ENCODE measurements at regions of chr2 and their contacts with region 1.

Region 1: DNA sequence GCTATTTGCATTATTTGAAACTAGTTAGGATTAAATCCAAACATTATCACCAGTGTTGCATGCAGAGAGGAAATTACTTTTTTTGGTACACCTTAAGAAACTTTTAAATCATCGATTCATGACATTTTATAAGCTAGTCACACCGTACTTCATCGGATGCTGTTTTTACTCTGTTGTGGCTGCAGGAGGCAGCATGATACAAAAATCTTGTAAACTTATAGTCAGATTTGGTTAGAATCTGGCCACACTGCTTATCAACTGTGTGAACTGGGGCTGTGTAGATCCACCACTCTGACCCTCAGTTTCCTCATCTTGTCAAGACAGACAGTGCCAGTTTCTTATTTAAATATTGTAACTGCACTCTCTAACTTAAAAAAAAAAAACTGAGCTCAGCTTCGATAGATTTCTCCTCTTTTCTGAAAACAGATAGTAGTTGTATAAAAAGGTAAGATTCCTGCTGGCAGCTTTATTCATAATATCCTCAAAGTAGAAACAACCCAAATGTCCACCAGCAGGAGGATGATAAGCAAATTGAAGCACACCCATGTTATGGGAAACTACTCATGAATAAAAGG is 77.8 kb downstream of the RAPGEF4 start:
- DNase-seq: peak; percentile 33
- H3K4me3 ChIP-seq: no peak overlapping the region
- H3K27ac ChIP-seq: peak overlapping the region in 1 of 2 experiments; percentile 89; a peak in 2 of 4 replicates
- H3K4me1 ChIP-seq: peaks cover 0 to 32% of the 10 kb centered on the region in 2 experiments; a peak in 2 of 4 replicates
- H3K27me3 ChIP-seq: no peaks in the 10 kb centered on the region
- CTCF ChIP-seq: peak; percentile 63
- EP300 ChIP-seq: 0 out of 4 replicates have a peak, but pooled peaks of 1 of the 2 experiments have one; percentile 5
- RAD21 ChIP-seq: peak; percentile 92

Region 2: DNA sequence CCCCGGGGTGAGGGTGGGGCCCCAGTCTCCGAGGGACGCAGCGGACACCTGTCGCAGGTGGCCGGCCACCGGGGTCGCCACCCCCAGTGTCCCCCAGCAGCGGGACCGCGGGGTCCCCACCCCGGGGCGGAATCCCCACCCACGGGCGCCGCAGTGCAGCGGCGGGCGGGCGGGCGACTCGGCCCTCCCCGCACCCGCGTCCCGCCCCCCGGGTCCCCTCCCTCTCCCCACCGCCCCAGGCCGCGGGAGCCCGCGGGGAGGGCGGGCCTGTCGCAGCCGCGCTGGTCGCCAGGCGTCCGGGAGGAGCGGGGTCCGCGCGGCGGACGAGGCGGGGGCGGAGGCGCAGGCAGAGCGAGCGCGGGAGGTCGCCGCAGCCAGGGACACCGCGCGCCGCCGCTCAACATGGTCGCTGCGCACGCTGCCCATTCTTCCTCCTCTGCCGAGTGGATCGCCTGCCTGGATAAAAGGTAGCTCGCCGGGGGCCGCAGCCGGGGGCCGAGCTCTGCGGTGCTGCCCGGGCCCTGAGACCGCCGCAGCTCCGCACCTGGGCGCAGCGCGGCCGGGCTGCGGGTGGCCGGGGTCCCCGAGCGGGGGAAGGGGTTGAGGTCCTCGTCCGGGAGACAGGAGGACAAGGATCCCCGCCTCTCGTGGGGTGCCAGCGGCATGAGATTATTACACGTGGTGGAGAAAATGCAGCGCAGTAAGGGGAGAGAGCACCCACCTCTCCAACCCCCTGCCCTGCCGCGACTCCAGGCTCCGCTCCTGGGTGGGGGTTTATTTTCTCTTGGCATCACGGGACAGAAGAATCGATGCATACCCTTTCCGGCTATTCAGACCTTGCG is 77.6 kb before region 1 on chr2 and contains the start of gene RAPGEF4:
- CTCF ChIA-PET with region 1: no interaction called
- POLR2A ChIA-PET with region 1: no interaction called
- DNase-seq: peak; percentile 89
- H3K4me3 ChIP-seq: peak within 1 kb of the TSS; percentile 56 to 57
- H3K27ac ChIP-seq: no peak within 1 kb of the TSS
- H3K4me1 ChIP-seq: peaks cover 0 to 6% of the 10 kb centered on the region in 2 experiments; a peak in 2 of 4 replicates
- H3K27me3 ChIP-seq: peaks cover 19% of the 10 kb centered on the region
- CTCF ChIP-seq: no peak
- EP300 ChIP-seq: no peak
- RAD21 ChIP-seq: no peak
- polyA plus RNA-seq, gene RAPGEF4: 0.30 and 1.2 TPM in 2 replicates

Region 3: GRCh38 chr2:172845028-172845630 is 31.7 kb after region 1 on chr2:
- CTCF ChIA-PET with region 1: interaction called, 21 read pairs
- POLR2A ChIA-PET with region 1: no interaction called
- DNase-seq: no peak
- H3K4me3 ChIP-seq: no peak overlapping the region
- H3K27ac ChIP-seq: peak overlapping the region in 1 of 2 experiments; percentile 60; a peak in 2 of 4 replicates
- H3K4me1 ChIP-seq: peaks cover 0 to 48% of the 10 kb centered on the region in 2 experiments; a peak in 2 of 4 replicates
- H3K27me3 ChIP-seq: no peaks in the 10 kb centered on the region
- CTCF ChIP-seq: no peak
- EP300 ChIP-seq: no peak
- RAD21 ChIP-seq: no peak

Region 4: GRCh38 chr2:172864182-172864581 is 50.8 kb after region 1 on chr2:
- CTCF ChIA-PET with region 1: interaction called, 19 read pairs
- POLR2A ChIA-PET with region 1: interaction called, 5 read pairs
- DNase-seq: no peak
- H3K4me3 ChIP-seq: no peak overlapping the region; a peak in 1 of 4 replicates
- H3K27ac ChIP-seq: no peak overlapping the region
- H3K4me1 ChIP-seq: peaks cover 5 to 18% of the 10 kb centered on the region in 2 experiments; a peak in 2 of 4 replicates
- H3K27me3 ChIP-seq: no peaks in the 10 kb centered on the region
- CTCF ChIP-seq: peak; percentile 61
- EP300 ChIP-seq: no peak
- RAD21 ChIP-seq: peak; percentile 79

Region 5: DNA sequence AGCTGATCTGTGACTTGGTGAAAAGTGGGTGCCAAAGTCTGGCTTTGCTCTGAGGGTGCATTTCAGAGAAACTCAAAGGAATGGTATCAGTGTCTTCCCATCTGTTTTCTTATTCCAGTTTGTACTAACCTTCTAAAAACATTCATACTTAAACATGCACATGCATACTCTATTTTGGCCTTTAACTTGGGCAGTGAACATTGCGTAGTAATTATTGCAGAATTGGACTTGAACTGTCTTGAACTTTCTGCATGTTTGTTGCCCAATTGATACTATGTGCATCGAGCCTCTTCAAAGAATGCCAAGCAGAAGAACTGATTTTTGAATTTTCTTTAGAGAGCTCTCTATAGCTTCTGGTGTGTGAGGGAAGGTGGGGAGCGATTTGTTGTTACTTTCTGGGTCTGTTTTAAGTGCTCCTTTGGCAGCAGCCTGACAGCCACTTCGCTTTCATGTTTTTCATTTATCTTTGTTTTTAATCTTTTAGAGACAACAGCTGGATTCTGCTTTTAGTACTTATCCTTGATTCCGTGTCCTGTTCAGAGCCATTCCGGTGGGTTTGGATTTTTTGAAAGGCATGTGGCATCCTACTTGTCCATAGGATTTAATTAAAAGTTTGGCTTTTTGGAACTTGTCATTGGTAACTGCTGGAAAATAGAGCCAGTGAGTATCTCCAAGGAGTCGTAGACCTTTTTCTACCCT is 81.4 kb after region 1 on chr2:
- CTCF ChIA-PET with region 1: interaction called, 12 read pairs
- POLR2A ChIA-PET with region 1: no interaction called
- DNase-seq: peak; percentile 29
- H3K4me3 ChIP-seq: no peak overlapping the region
- H3K27ac ChIP-seq: peak overlapping the region in 1 of 2 experiments; percentile 99; a peak in 2 of 4 replicates
- H3K4me1 ChIP-seq: peaks cover 0 to 58% of the 10 kb centered on the region in 2 experiments; a peak in 2 of 4 replicates
- H3K27me3 ChIP-seq: peaks cover 22% of the 10 kb centered on the region; the same call in 1 of the 2 replicates
- CTCF ChIP-seq: no peak
- EP300 ChIP-seq: peak in 1 of 2 experiments; percentile 65; a peak in 2 of 4 replicates
- RAD21 ChIP-seq: peak; percentile 21; the same call in 1 of the 2 replicates

Region 6: GRCh38 chr2:172905937-172906811 is 92.8 kb after region 1 on chr2:
- CTCF ChIA-PET with region 1: interaction called, 13 read pairs
- POLR2A ChIA-PET with region 1: no interaction called
- DNase-seq: peak; percentile 64
- H3K4me3 ChIP-seq: no peak overlapping the region
- H3K27ac ChIP-seq: peak overlapping the region in 1 of 2 experiments; percentile 95; a peak in 2 of 4 replicates
- H3K4me1 ChIP-seq: peaks cover 0 to 33% of the 10 kb centered on the region in 2 experiments; a peak in 2 of 4 replicates
- H3K27me3 ChIP-seq: no peaks in the 10 kb centered on the region
- CTCF ChIP-seq: no peak
- EP300 ChIP-seq: peak in 1 of 2 experiments; percentile 52; a peak in 2 of 4 replicates
- RAD21 ChIP-seq: peak; percentile 36

Region 7: GRCh38 chr2:172921532-172922236 is 108.3 kb after region 1 on chr2:
- CTCF ChIA-PET with region 1: interaction called, 10 read pairs
- POLR2A ChIA-PET with region 1: no interaction called
- DNase-seq: no peak
- H3K4me3 ChIP-seq: no peak overlapping the region
- H3K27ac ChIP-seq: no peak overlapping the region
- H3K4me1 ChIP-seq: peaks cover 0 to 2% of the 10 kb centered on the region in 2 experiments; a peak in 1 of 4 replicates
- H3K27me3 ChIP-seq: no peaks in the 10 kb centered on the region
- CTCF ChIP-seq: no peak
- EP300 ChIP-seq: no peak
- RAD21 ChIP-seq: no peak

Measured in SK-N-SH (cell line).